CD8-positive, alpha-beta T cell (primary cell): ENCODE measurements at regions of chr20 and their contacts with region 1.

Region 1: GRCh38 chr20:17504898-17505635 is 26.1 kb downstream of the BFSP1 start:
- DNase-seq: peak; percentile 13 to 84 (median 48)
- ATAC-seq: peak; percentile 72
- H3K4me3 ChIP-seq: peak overlapping the region; percentile 56 to 61
- H3K4me3 Mint-ChIP-seq: peak overlapping the region; percentile 89
- H3K27ac ChIP-seq: peak overlapping the region in 1 of 2 experiments; percentile 64
- H3K27ac Mint-ChIP-seq: peak overlapping the region; percentile 89
- H3K4me1 ChIP-seq: peaks cover 24% of the 10 kb centered on the region
- H3K4me1 Mint-ChIP-seq: peaks cover 36% of the 10 kb centered on the region
- H3K27me3 ChIP-seq: no peaks in the 10 kb centered on the region
- H3K27me3 Mint-ChIP-seq: no peaks in the 10 kb centered on the region
- CTCF ChIP-seq: peak; percentile 84

Region 2: GRCh38 chr20:17536944-17537444 is 31.9 kb after region 1 on chr20:
- CTCF ChIA-PET with region 1: interaction called, 11 read pairs
- POLR2A ChIA-PET with region 1: no interaction called
- intact Hi-C with region 1: loop called (anchors 1 to 2 kb)
- DNase-seq: peak; percentile 37 to 83 (median 67)
- ATAC-seq: peak; percentile 98
- H3K4me3 ChIP-seq: no peak overlapping the region
- H3K4me3 Mint-ChIP-seq: no peak overlapping the region
- H3K27ac ChIP-seq: no peak overlapping the region
- H3K27ac Mint-ChIP-seq: no peak overlapping the region
- H3K4me1 ChIP-seq: no peaks in the 10 kb centered on the region
- H3K4me1 Mint-ChIP-seq: peaks cover 3% of the 10 kb centered on the region
- H3K27me3 ChIP-seq: no peaks in the 10 kb centered on the region
- H3K27me3 Mint-ChIP-seq: peaks cover 14% of the 10 kb centered on the region
- CTCF ChIP-seq: peak; percentile 83

Region 3: DNA sequence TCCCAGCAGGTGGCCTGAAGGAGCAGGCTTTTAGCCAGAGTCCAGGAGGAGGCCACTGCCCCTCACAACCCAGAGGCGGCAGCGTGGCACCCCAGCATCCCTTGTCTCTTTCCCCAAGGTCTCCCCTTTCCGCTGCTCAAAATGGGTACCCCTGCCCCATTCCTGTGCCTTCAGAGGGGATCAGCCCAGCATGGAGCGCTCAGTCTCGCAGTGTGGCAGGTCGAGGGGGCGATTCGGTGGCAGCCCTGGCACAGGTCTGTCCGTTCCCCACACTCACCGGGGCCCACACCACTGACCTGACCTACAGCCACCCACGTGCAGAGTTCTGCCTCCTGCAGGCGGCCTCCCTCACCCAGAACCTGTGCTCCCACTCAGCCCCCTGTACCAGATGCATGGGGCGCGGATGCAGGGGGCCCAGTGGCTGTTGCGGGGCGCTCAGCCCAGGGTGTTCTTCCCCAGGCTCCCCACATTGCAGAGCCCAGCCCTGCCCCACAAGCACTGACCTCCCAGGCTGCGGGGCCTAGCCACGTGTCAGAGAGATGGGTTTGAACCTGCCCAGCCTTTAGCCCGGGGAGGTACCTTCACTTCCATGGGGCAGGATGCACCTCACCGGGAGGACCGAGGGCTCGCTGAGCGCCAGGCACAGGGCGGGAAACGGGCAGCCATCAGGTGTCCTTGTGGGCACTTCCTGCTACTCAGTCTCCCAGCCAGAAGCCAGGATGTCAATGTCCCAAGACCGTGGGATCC is 106.6 kb after region 1 on chr20:
- CTCF ChIA-PET with region 1: interaction called, 13 read pairs
- POLR2A ChIA-PET with region 1: interaction called, 14 read pairs
- intact Hi-C with region 1: no loop called
- DNase-seq: peak in 2 of 9 experiments; percentile 29 to 39
- ATAC-seq: no peak
- H3K4me3 ChIP-seq: no peak overlapping the region
- H3K4me3 Mint-ChIP-seq: peak overlapping the region; percentile 69
- H3K27ac ChIP-seq: peak overlapping the region; percentile 43 to 87
- H3K27ac Mint-ChIP-seq: peak overlapping the region; percentile 99
- H3K4me1 ChIP-seq: peaks cover 41% of the 10 kb centered on the region
- H3K4me1 Mint-ChIP-seq: peaks cover 44% of the 10 kb centered on the region
- H3K27me3 ChIP-seq: no peaks in the 10 kb centered on the region
- H3K27me3 Mint-ChIP-seq: no peaks in the 10 kb centered on the region
- CTCF ChIP-seq: peak; percentile 42

Region 4: DNA sequence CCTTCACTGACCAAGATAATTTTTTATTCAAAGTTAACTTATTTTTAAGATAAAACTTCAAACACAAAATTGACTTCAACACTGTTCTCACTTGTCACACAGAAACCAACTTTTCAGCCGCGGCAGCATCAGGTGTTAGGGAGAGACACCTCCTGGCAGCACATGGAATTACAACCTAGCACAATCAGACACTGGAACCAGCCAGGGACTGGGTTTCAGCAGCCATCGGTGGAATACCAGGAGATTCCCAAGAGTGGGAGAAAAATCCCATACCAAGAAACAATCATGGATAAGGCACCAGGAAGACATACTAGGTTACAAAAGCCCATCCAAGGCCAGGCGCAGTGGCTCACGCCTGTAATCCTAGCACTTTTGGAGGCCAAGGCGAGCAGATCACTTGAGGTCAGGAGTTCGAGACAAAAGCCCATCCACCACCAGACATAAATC is 393.5 kb after region 1 on chr20:
- CTCF ChIA-PET with region 1: interaction called, 68 read pairs
- POLR2A ChIA-PET with region 1: no interaction called
- intact Hi-C with region 1: loop called (anchors 1 kb)
- DNase-seq: peak; percentile 34 to 79 (median 63)
- ATAC-seq: peak; percentile 85
- H3K4me3 ChIP-seq: no peak overlapping the region
- H3K4me3 Mint-ChIP-seq: no peak overlapping the region
- H3K27ac ChIP-seq: no peak overlapping the region
- H3K27ac Mint-ChIP-seq: no peak overlapping the region
- H3K4me1 ChIP-seq: peaks cover 4% of the 10 kb centered on the region
- H3K4me1 Mint-ChIP-seq: peaks cover 5% of the 10 kb centered on the region
- H3K27me3 ChIP-seq: peaks cover 0 to 4% of the 10 kb centered on the region in 2 experiments
- H3K27me3 Mint-ChIP-seq: peaks cover 20% of the 10 kb centered on the region
- CTCF ChIP-seq: peak; percentile 93

Region 5: GRCh38 chr20:17995967-17996819 is 491.1 kb after region 1 on chr20:
- CTCF ChIA-PET with region 1: interaction called, 21 read pairs
- POLR2A ChIA-PET with region 1: no interaction called
- intact Hi-C with region 1: loop called (anchors 1 kb)
- DNase-seq: peak in 6 of 9 experiments; percentile 11 to 78 (median 38)
- ATAC-seq: peak; percentile 97
- H3K4me3 ChIP-seq: no peak overlapping the region
- H3K4me3 Mint-ChIP-seq: no peak overlapping the region
- H3K27ac ChIP-seq: no peak overlapping the region
- H3K27ac Mint-ChIP-seq: no peak overlapping the region
- H3K4me1 ChIP-seq: no peaks in the 10 kb centered on the region
- H3K4me1 Mint-ChIP-seq: peaks cover 9% of the 10 kb centered on the region
- H3K27me3 ChIP-seq: no peaks in the 10 kb centered on the region
- H3K27me3 Mint-ChIP-seq: peaks cover 19% of the 10 kb centered on the region
- CTCF ChIP-seq: peak; percentile 97

Region 6: GRCh38 chr20:18224968-18225568 is 720.0 kb after region 1 on chr20:
- CTCF ChIA-PET with region 1: no interaction called
- POLR2A ChIA-PET with region 1: no interaction called
- intact Hi-C with region 1: no loop called
- DNase-seq: no peak
- ATAC-seq: no peak
- H3K4me3 ChIP-seq: no peak overlapping the region
- H3K4me3 Mint-ChIP-seq: no peak overlapping the region
- H3K27ac ChIP-seq: no peak overlapping the region
- H3K27ac Mint-ChIP-seq: no peak overlapping the region
- H3K4me1 ChIP-seq: no peaks in the 10 kb centered on the region
- H3K4me1 Mint-ChIP-seq: no peaks in the 10 kb centered on the region
- H3K27me3 ChIP-seq: no peaks in the 10 kb centered on the region
- H3K27me3 Mint-ChIP-seq: peaks cover 7% of the 10 kb centered on the region
- CTCF ChIP-seq: no peak